Activated CD4-positive, alpha-beta T cell treated with anti-CD3 and anti-CD28 coated beads for 36 hours (primary cell): ENCODE measurements at regions of chr11 and their contacts with region 1.

Region 1: DNA sequence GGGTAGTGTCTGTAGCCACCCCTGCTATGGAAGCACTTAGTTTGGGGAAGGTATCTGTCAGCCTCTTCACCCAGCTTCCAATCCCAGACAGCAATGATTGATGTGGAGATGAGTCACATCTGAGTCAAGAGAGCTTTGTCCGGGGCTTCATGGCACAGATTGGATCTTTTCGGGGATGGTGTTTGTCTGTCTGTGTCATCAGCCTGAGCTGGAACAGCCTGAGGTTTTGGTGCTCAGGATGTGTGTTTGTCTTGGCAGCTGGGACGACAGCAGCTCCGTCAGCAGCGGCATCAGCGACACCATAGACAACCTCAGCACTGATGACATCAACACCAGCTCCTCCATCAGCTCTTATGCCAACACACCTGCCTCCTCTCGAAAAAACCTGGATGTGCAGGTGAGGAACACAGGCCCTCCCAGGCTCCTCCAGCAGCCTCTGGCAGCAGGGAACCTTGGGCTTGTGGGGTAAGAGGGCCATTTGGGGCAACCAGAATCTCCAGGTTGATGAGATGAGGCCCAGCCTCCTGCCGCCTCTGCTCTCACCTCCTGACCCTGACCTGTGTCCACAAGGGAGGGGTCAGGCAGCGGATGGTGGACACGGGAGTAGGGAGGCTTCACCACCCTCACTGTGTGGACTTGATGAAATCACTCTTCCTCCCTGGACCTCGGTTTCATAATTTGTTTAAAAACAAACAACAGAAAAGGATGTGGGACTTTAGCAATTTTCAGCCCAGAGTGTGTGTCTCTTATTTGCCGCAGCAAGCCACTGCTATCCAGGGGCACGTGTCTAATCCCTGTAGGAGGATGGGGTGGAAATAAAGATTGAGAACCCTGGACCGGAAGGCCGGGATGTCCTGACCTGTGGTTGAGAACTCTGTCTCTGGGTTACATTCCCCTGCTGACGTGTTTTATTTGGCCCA is 124.3 kb downstream of the DBX1 start:
- DNase-seq: no peak
- ATAC-seq: no peak
- H3K4me3 Mint-ChIP-seq: no peak overlapping the region
- H3K27ac Mint-ChIP-seq: no peak overlapping the region
- H3K4me1 Mint-ChIP-seq: peaks cover 8% of the 10 kb centered on the region
- H3K27me3 Mint-ChIP-seq: peaks cover 21% of the 10 kb centered on the region

Region 2: GRCh38 chr11:19970944-19971343 is 65.0 kb before region 1 on chr11:
- CTCF ChIA-PET with region 1: no interaction called
- POLR2A ChIA-PET with region 1: no interaction called
- intact Hi-C with region 1: loop called in 1 of 2 experiments (anchors 2 kb)
- DNase-seq: peak; percentile 59
- ATAC-seq: peak; percentile 87
- H3K4me3 Mint-ChIP-seq: no peak overlapping the region
- H3K27ac Mint-ChIP-seq: no peak overlapping the region
- H3K4me1 Mint-ChIP-seq: peaks cover 9% of the 10 kb centered on the region
- H3K27me3 Mint-ChIP-seq: peaks cover 11% of the 10 kb centered on the region

Region 3: GRCh38 chr11:19978668-19979518 is 57.1 kb before region 1 on chr11:
- CTCF ChIA-PET with region 1: no interaction called
- POLR2A ChIA-PET with region 1: no interaction called
- intact Hi-C with region 1: loop called in 1 of 2 experiments (anchors 2 kb)
- DNase-seq: peak; percentile 43
- ATAC-seq: peak; percentile 90
- H3K4me3 Mint-ChIP-seq: no peak overlapping the region
- H3K27ac Mint-ChIP-seq: peak overlapping the region; percentile 75
- H3K4me1 Mint-ChIP-seq: peaks cover 12% of the 10 kb centered on the region
- H3K27me3 Mint-ChIP-seq: peaks cover 10% of the 10 kb centered on the region